ENCODE measurements at regions of chr10 and their contacts with region 1.

Region 1: GRCh38 chr10:32346134-32346550 is 816 bp downstream of the EPC1 start:
- DNase-seq: peak; percentile 95
- CTCF ChIP-seq: peak; percentile 96

Region 2: DNA sequence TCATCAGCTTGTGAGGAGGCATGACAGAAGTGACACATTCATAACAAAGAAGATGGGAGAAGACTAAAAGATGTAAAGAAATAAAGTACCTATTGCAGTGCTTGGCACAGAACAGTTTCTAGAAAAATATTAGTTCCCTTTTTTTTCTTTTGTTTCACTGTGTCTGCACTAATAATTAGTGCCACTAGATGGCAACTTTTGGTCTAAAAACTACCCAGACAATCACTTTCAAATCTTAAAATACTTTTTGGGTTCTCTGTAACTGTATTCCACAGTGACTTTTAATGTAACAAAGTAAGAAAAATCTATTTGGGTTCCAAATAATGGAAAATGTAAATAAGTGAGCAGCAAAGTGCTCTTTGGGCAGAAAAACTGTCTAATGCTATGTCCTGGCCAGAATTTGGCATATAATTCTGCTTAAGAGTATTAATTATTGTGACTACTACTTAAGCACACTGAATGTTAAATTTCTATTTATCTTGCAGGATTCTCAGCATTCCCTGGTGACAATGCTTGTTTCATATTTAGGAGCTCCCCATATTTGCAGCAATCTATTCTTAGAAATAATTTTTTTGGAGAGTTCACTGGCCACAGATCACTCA is 155.2 kb before region 1 on chr10:
- in situ Hi-C with region 1: loop called (anchors 10 kb)
- DNase-seq: peak; percentile 52
- CTCF ChIP-seq: peak; percentile 72

Region 3: DNA sequence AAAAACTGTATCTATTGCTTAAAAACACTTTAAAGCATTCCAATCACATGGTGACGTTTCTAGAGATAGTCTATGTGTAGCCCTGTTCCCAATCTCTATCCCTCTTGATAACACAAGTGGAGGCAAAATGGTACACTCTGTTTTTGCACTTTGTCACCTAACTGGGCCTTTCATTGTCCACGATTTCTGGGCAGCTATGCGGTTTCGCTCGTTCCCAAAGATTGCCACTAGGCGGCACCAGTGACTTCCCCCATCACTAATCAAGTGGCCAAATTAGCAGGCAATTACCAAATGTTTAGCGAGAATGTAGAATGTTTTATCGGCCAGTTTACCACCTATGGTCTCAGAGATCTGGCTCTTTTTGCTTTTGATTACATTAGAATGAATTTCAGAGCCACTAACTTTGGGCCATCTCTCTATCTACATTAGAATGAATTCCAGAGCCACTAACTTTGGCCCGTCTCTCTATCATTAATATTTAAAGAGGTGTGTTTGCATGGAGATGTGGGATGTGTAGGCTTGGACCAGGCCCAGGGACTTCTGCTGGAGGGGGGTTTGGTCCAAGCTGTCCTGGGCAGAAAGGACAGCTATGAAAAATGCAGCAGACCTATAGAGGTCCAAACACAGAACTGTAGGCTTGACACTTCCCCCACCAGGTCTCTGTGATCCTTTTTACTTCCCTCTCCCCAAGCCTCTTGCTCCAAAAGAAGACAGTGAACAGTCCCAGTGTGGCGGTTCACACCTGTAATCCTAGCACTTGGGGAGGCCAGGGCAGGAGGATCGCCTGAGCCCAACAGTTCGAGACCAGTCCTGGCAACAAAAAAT is 89.3 kb before region 1 on chr10:
- in situ Hi-C with region 1: loop called (anchors 10 kb)
- DNase-seq: peak; percentile 79
- CTCF ChIP-seq: peak; percentile 88